Left lung (tissue), 14 donors: ENCODE measurements at regions of chr12 and their contacts with region 1.

Region 1: GRCh38 chr12:118603610-118604361 is 227.4 kb downstream of the SUDS3 start:
- DNase-seq: no peak
- ATAC-seq: no peak
- H3K4me3 ChIP-seq: no peak overlapping the region
- H3K27ac ChIP-seq: no peak overlapping the region
- H3K4me1 ChIP-seq: no peaks in the 10 kb centered on the region
- H3K27me3 ChIP-seq: no peaks in the 10 kb centered on the region
- CTCF ChIP-seq: no peak

Region 2: DNA sequence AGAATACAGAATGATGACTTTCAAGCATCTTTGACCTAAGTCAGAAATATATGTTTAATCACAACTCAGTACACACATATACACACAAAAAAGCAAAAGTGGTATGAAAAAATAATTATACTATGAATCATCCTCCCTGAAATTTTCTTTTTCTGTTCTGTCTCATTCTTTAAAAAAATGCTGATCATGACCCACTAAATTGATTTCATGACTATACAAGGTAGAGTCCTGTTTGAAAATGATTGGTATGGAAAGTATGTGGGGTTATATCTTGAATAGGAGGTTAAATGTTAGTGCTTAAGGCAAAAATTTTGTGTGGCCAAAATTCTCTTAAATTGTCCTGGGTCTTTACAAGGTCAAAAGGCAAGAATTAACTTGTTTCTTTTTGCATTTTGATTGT is 147.0 kb before region 1 on chr12:
- intact Hi-C with region 1: loop called in 1 of 2 experiments (anchors 5 kb)
- DNase-seq: no peak
- ATAC-seq: no peak
- H3K4me3 ChIP-seq: no peak overlapping the region
- H3K27ac ChIP-seq: no peak overlapping the region
- H3K4me1 ChIP-seq: no peaks in the 10 kb centered on the region
- H3K27me3 ChIP-seq: no peaks in the 10 kb centered on the region
- CTCF ChIP-seq: no peak